ENCODE measurements at regions of chr18 and their contacts with region 1.

Region 1: DNA sequence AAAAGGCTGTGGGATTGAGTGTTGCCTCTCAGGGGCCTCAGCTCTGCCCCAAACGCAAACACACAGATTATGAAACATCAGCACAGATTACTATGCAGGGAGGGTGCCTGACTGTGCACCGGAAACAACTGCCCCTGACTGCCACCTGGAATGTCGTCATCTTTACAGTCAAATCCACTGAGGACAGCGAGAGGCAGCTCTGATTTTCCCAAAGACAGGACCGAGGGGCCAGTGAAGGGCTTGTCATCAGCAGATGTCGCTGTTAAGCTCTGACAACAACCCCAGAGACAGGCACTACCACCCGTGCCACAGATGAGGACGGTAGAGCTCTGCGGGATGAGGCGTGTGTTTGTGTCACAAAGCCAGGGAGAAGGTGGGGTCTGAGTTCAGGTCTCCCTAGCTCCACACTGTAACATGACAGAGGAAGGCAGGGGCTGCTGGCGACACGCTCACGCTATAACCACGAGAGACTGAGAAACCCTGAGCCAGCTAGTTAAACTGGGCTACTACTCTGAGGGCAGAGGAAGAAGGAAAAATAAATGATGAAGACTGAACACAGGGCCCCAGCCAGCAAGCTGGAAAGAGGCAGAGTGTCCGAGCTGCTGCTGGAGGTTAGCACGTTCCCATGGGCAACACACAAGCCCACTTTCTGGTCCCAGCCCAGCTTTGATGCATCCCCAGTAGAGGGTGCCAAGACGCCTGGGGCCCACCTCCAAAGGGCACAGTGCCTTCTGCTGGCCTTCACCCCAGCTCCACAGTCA is 47.0 kb downstream of the PARD6G start:
- DNase-seq: peak; percentile 41
- ATAC-seq: peak; percentile 62
- H3K4me3 Mint-ChIP-seq: no peak overlapping the region
- H3K27ac Mint-ChIP-seq: peak overlapping the region; percentile 12; the same call in 1 of the 2 replicates
- H3K4me1 Mint-ChIP-seq: peaks cover 64% of the 10 kb centered on the region
- H3K27me3 Mint-ChIP-seq: no peaks in the 10 kb centered on the region
- CTCF ChIP-seq: no peak

Region 2: GRCh38 chr18:79798999-79799370 is 401.4 kb before region 1 on chr18:
- CTCF ChIA-PET with region 1: no interaction called
- POLR2A ChIA-PET with region 1: no interaction called
- DNase-seq: no peak
- ATAC-seq: peak; percentile 13
- H3K4me3 Mint-ChIP-seq: peak overlapping the region; percentile 68
- H3K27ac Mint-ChIP-seq: no peak overlapping the region
- H3K4me1 Mint-ChIP-seq: peaks cover 9% of the 10 kb centered on the region
- H3K27me3 Mint-ChIP-seq: peaks cover 42% of the 10 kb centered on the region
- CTCF ChIP-seq: no peak

Region 3: DNA sequence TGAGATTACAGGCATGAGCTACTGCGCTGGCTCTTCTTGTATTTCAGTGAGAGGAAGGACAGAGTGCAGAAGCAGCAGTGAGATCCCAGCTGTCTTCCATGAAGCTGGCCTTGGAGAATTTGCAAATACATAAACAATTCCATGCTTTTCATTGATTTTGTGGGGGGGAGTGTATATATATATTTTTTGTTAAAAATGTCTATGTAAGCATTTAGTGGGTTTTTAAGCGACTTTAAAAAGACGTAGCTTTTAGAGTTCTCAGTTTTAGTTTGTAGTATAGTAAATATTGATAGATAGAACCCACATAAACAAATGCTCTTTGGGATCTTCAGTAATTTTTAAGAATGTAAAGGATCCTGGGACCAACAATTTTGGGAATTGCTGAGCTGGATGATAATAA is 159.8 kb before region 1 on chr18:
- CTCF ChIA-PET with region 1: no interaction called
- POLR2A ChIA-PET with region 1: no interaction called
- DNase-seq: no peak
- ATAC-seq: no peak
- H3K4me3 Mint-ChIP-seq: no peak overlapping the region
- H3K27ac Mint-ChIP-seq: no peak overlapping the region
- H3K4me1 Mint-ChIP-seq: peaks cover 12% of the 10 kb centered on the region
- H3K27me3 Mint-ChIP-seq: no peaks in the 10 kb centered on the region
- CTCF ChIP-seq: no peak

Region 4: DNA sequence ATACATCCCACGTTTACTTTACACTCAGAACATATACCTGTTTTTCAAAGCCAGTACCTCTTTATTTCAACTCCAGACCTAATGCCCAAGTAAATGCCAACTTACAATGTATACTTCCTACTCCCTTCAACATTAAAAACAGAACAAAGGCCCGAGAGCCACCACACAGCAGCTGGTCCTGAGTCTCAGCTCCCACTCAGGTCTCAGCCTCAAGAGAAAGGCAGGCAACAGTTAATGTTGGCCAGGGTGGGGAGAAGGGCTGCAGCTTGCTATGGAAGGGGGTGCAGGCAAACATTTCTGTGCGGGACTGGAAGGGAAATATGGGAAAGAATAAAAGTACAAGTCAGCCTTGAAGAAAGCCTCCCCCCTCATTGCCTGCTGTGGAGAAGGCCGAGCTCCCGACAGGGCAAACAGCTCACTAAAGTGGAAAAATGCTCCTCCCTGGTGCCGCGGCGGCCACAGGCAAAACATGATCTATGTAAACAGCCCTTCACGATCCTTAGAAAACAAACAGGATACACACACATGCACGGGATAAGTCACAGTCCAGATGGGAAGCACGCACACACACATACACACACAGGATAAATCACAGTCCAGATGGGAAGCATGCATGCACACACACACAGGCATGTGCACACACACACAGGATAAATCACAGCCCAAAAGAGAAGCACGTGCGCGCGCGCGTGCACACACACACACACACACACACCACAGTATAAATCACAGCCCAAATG is 23.8 kb before region 1 on chr18:
- CTCF ChIA-PET with region 1: interaction called, 14 read pairs
- POLR2A ChIA-PET with region 1: no interaction called
- DNase-seq: no peak
- ATAC-seq: no peak
- H3K4me3 Mint-ChIP-seq: no peak overlapping the region
- H3K27ac Mint-ChIP-seq: no peak overlapping the region; the same call in 1 of the 2 replicates
- H3K4me1 Mint-ChIP-seq: peaks cover under 1% of the 10 kb centered on the region; the same call in 1 of the 2 replicates
- H3K27me3 Mint-ChIP-seq: 0 out of 2 replicates have a peak, but pooled peaks cover 4% of the 10 kb centered on the region
- CTCF ChIP-seq: no peak

Region 5: DNA sequence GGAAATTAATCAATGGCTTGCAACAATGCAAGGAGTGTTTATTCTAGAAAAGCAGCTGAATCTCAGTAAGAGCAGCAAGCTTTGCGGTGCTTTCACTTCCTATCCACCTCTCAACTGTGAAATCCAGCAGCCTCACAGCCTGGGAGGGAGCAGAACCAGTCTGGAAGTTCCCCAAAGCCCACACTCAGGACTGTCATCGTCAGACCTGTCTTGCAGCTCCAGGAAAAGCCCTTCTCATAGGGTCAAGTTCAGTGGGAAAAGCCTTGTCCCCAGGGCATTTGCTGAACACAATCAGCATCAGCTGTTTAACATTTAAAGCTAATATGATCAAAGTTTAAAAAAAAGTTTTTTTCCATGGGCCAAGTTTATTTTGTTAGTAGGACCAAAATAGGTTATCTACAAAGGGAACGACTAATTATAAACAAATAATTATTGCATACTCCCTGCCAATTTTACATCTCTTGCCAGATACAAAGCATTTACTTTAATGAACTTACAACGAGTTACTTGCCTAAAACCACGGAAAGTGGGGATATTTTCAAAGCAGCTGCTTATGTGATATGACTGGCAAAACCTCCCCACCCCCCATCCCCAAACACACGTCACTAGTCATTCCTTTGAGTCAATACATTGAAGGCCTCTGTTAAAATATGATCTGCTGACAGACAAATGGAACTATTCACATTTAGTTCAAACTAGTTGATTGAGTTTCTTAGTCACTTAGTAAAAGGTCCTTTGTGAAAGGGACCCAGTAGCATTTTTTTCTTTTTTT is 10.1 kb after region 1 on chr18:
- CTCF ChIA-PET with region 1: interaction called, 12 read pairs
- POLR2A ChIA-PET with region 1: no interaction called
- DNase-seq: no peak
- ATAC-seq: peak; percentile 56
- H3K4me3 Mint-ChIP-seq: no peak overlapping the region
- H3K27ac Mint-ChIP-seq: no peak overlapping the region
- H3K4me1 Mint-ChIP-seq: peaks cover 12% of the 10 kb centered on the region
- H3K27me3 Mint-ChIP-seq: no peaks in the 10 kb centered on the region
- CTCF ChIP-seq: no peak

Region 6: DNA sequence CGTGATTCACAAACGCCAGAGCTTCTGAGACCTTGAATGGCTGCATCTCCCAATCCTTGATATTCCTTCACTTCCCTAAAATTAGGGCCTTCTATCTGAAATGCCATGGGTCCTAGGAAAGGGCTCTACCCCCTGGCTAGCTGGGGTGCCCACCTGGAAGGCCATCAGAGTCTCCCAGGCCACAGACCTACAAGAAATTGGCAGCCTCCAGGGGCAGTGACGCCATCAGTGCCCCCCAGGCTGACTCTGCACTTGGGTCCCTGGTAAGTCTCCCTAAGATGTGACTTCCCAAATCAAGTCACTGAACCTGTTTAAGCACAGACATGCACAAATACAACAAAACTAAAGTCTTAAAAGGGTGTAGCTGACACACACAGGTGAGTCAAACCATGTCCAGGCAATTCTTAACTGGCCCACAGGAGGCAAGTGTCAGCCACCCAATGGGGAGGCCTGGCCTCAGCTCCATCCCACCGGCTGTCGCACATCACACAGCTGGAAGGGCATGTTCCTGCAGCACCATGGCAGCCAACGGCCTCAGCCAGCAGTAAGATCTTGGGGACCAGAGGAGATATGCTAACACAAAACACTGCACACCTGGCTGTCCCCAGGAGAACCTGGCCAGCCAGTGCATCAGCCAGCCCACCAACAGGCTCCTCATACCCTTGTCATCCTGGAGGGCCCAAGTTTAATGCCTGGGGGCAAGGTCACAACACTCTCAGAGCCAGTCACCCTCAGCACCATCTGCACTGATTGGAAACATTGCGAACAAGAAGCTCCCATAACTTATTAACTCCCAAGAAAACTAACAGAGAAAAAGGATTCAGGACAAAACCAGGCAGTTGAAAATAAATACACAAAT is 41.8 kb after region 1 on chr18:
- CTCF ChIA-PET with region 1: interaction called, 18 read pairs
- POLR2A ChIA-PET with region 1: interaction called, 5 read pairs
- DNase-seq: no peak
- ATAC-seq: no peak
- H3K4me3 Mint-ChIP-seq: no peak overlapping the region
- H3K27ac Mint-ChIP-seq: no peak overlapping the region
- H3K4me1 Mint-ChIP-seq: peaks cover 13% of the 10 kb centered on the region
- H3K27me3 Mint-ChIP-seq: peaks cover 11% of the 10 kb centered on the region
- CTCF ChIP-seq: no peak

Measured in WTC11 (cell line).